Caco-2 (cell line): ENCODE measurements at regions of chr14 and their contacts with region 1.

Region 1: GRCh38 chr14:24241829-24242443 is 487 bp downstream of the TINF2 start:
- DNase-seq: peak; percentile 95
- H3K4me3 ChIP-seq: peak overlapping the region; percentile 71
- H3K4me3 Mint-ChIP-seq: peak overlapping the region; percentile 74
- H3K27ac Mint-ChIP-seq: peak overlapping the region; percentile 91
- H3K4me1 ChIP-seq: no peaks in the 10 kb centered on the region
- H3K4me1 Mint-ChIP-seq: peaks cover 9% of the 10 kb centered on the region
- H3K27me3 ChIP-seq: no peaks in the 10 kb centered on the region
- H3K27me3 Mint-ChIP-seq: no peaks in the 10 kb centered on the region
- CTCF ChIP-seq: peak; percentile 49 to 58

Region 2: DNA sequence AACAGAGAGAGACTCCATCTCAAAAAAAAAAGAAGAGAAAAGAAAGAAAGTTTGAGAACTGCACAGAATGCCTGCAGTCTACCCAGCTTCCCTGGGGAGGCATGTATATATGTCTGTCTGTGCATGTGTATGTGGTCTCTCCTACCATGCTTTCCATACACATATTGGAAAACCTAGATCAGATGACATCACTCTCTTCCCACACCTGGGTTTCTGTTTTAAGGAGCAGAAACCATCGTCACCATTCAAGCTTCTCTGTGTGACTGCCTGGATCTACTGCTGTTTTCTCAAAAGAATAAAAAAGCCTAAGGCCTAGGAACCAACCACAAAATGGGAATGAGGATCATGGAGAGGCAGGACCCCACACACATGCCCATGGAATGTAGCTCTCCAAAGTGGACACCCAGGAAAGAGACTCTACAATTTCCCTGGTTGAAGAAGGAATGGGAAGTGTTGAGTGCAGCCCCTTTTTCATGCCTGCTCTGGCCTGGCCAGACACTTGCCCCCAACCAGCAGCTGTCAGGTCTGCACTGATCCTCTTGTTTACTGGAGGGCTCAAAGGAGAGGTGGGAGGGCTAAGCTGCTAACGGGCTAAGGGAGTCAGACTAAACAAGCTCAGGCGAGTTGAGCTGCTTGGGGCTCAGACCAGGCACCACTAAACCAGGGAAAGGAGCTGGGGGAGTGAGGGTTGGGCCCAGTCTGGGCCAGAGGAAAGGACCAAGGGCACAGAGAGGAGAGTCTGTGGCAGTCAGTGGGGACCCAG is 155.6 kb before region 1 on chr14:
- CTCF ChIA-PET with region 1: no interaction called
- POLR2A ChIA-PET with region 1: no interaction called
- intact Hi-C with region 1: no loop called
- DNase-seq: no peak
- H3K4me3 ChIP-seq: no peak overlapping the region
- H3K4me3 Mint-ChIP-seq: no peak overlapping the region
- H3K27ac Mint-ChIP-seq: no peak overlapping the region
- H3K4me1 ChIP-seq: peaks cover 8% of the 10 kb centered on the region
- H3K4me1 Mint-ChIP-seq: peaks cover 8% of the 10 kb centered on the region
- H3K27me3 ChIP-seq: no peaks in the 10 kb centered on the region
- H3K27me3 Mint-ChIP-seq: no peaks in the 10 kb centered on the region
- CTCF ChIP-seq: no peak

Region 3: DNA sequence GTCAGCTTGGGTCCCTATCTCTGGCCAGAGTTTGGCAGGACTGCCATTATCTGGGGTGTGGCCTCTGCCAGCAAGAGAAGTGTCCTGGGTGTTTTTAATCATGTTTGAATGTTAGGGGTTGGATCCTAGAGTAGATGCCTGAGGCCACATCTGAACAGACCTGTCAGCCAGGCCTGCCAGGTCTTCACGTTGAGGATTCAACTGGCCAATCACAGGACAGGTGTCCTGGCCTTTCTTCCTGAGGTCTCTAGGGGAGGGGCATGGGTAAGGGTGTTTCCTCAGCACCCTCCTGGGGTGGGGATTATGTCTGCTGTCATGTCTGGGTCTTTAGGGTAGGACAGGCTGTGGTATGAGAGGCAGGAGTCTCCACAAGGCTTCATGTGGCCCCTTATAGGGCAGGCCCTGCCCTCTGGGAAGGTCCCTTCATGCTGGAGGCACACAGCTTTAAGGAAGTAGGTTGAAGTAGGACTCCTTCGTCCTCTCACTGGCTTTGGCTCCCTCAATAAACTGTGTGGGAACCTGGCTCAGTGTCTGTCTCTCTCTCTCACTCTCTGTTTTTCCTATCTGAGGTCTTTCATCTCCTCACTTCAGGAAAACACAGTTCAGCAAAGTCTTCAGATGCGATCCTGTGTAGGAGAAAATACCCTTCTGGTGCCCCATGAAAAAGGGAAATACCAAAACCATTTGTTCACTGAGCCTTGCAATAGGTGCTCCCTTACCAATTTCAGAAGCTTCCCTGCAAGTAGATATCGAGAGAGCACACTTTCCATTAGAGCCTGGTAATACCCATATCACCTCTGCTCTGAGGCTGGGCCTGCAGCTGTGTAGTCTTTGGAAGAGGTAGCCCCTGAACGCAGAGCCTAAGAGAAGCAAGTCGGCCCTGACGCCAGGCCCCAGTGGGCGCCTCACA is 118.2 kb before region 1 on chr14:
- CTCF ChIA-PET with region 1: no interaction called
- POLR2A ChIA-PET with region 1: no interaction called
- intact Hi-C with region 1: no loop called
- DNase-seq: no peak
- H3K4me3 ChIP-seq: no peak overlapping the region
- H3K4me3 Mint-ChIP-seq: no peak overlapping the region
- H3K27ac Mint-ChIP-seq: no peak overlapping the region
- H3K4me1 ChIP-seq: no peaks in the 10 kb centered on the region
- H3K4me1 Mint-ChIP-seq: no peaks in the 10 kb centered on the region
- H3K27me3 ChIP-seq: no peaks in the 10 kb centered on the region
- H3K27me3 Mint-ChIP-seq: no peaks in the 10 kb centered on the region
- CTCF ChIP-seq: no peak

Region 4: GRCh38 chr14:24271134-24271833 is 29.3 kb after region 1 on chr14 and contains the start of gene RABGGTA:
- CTCF ChIA-PET with region 1: interaction called, 42 read pairs
- POLR2A ChIA-PET with region 1: interaction called, 39 read pairs
- intact Hi-C with region 1: loop called (anchors 1 kb)
- DNase-seq: peak; percentile 91 to 93
- H3K4me3 ChIP-seq: peak within 1 kb of the TSS; percentile 95
- H3K4me3 Mint-ChIP-seq: peak within 1 kb of the TSS; percentile 76
- H3K27ac Mint-ChIP-seq: peak within 1 kb of the TSS; percentile 74
- H3K4me1 ChIP-seq: peaks cover 5% of the 10 kb centered on the region
- H3K4me1 Mint-ChIP-seq: peaks cover 11% of the 10 kb centered on the region
- H3K27me3 ChIP-seq: no peaks in the 10 kb centered on the region
- H3K27me3 Mint-ChIP-seq: no peaks in the 10 kb centered on the region
- CTCF ChIP-seq: peak; percentile 65 to 82
- total RNA-seq, gene RABGGTA: 27.1 and 30.4 TPM in 2 replicates

Region 5: DNA sequence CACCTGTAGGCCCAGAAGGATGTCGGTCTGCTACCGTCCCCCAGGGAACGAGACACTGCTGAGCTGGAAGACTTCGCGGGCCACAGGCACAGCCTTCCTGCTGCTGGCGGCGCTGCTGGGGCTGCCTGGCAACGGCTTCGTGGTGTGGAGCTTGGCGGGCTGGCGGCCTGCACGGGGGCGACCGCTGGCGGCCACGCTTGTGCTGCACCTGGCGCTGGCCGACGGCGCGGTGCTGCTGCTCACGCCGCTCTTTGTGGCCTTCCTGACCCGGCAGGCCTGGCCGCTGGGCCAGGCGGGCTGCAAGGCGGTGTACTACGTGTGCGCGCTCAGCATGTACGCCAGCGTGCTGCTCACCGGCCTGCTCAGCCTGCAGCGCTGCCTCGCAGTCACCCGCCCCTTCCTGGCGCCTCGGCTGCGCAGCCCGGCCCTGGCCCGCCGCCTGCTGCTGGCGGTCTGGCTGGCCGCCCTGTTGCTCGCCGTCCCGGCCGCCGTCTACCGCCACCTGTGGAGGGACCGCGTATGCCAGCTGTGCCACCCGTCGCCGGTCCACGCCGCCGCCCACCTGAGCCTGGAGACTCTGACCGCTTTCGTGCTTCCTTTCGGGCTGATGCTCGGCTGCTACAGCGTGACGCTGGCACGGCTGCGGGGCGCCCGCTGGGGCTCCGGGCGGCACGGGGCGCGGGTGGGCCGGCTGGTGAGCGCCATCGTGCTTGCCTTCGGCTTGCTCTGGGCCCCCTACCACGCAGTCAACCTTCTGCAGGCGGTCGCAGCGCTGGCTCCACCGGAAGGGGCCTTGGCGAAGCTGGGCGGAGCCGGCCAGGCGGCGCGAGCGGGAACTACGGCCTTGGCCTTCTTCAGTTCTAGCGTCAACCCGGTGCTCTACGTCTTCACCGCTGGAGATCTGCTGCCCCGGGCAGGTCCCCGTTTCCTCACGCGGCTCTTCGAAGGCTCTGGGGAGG is 69.0 kb after region 1 on chr14 and contains the start of gene LTB4R:
- CTCF ChIA-PET with region 1: interaction called, 42 read pairs
- POLR2A ChIA-PET with region 1: interaction called, 11 read pairs
- intact Hi-C with region 1: loop called (anchors 1 kb)
- DNase-seq: no peak
- H3K4me3 ChIP-seq: no peak within 1 kb of the TSS
- H3K4me3 Mint-ChIP-seq: no peak within 1 kb of the TSS
- H3K27ac Mint-ChIP-seq: no peak within 1 kb of the TSS
- H3K4me1 ChIP-seq: peaks cover 25% of the 10 kb centered on the region
- H3K4me1 Mint-ChIP-seq: peaks cover 27% of the 10 kb centered on the region
- H3K27me3 ChIP-seq: no peaks in the 10 kb centered on the region
- H3K27me3 Mint-ChIP-seq: no peaks in the 10 kb centered on the region
- CTCF ChIP-seq: no peak
- total RNA-seq, gene LTB4R: 7.3 and 7.8 TPM in 2 replicates

Region 6: DNA sequence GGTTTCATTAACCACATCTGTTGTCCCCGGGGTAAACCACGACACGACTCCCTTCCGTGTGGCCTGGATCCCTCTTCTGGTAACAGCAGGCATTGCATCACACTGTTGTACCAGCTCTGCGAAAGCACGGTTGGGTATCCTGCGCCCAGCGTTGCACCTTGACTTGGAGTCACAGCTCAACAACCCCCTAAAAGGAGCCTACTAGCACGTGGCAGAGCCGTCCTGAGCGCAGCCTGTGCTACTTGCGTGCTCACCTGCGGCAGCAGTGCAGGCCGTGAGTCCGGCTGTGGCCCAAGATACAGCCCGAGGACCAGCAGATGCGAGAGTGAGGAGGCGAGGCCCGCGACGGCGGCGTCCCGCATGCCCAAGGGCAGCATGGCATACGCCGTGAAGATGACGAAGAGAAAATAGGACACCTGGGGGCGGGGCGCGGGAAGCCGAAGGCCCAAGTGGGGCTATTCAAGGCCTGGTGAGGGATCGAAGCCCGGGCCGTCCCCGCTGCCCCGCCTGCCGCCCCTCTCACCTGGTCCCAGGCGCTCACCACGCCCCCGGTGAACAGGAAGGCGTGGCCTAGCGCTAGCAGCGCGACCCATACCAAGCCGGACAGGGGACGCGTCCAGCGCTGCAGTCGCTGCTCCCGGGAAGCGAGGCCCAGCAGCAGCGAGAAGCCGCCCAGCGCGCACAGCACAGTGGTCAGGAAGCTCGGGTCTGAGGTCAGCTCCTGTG is 90.5 kb after region 1 on chr14:
- CTCF ChIA-PET with region 1: interaction called, 18 read pairs
- POLR2A ChIA-PET with region 1: interaction called, 7 read pairs
- intact Hi-C with region 1: no loop called
- DNase-seq: peak; percentile 76 to 80
- H3K4me3 ChIP-seq: peak overlapping the region; percentile 55
- H3K4me3 Mint-ChIP-seq: peak overlapping the region; percentile 83
- H3K27ac Mint-ChIP-seq: peak overlapping the region; percentile 15
- H3K4me1 ChIP-seq: peaks cover 15% of the 10 kb centered on the region
- H3K4me1 Mint-ChIP-seq: peaks cover 7% of the 10 kb centered on the region
- H3K27me3 ChIP-seq: no peaks in the 10 kb centered on the region
- H3K27me3 Mint-ChIP-seq: no peaks in the 10 kb centered on the region
- CTCF ChIP-seq: peak; percentile 56 to 66